ENCODE measurements at regions of chr1 and their contacts with region 1.

Region 1: GRCh38 chr1:78254517-78254916 is 208.8 kb downstream of the GIPC2 start:
- DNase-seq: peak; percentile 96
- ATAC-seq: peak; percentile 89
- H3K4me3 ChIP-seq: peak overlapping the region; percentile 14; the same call in 1 of the 2 replicates
- H3K27ac ChIP-seq: peak overlapping the region; percentile 98
- H3K4me1 ChIP-seq: peaks cover 33% of the 10 kb centered on the region
- H3K27me3 ChIP-seq: no peaks in the 10 kb centered on the region
- CTCF ChIP-seq: no peak

Region 2: GRCh38 chr1:78114034-78114956 is 140.2 kb before region 1 on chr1:
- CTCF ChIA-PET with region 1: no interaction called
- POLR2A ChIA-PET with region 1: no interaction called
- intact Hi-C with region 1: no loop called
- DNase-seq: peak; percentile 91
- ATAC-seq: peak; percentile 76
- H3K4me3 ChIP-seq: no peak overlapping the region
- H3K27ac ChIP-seq: no peak overlapping the region
- H3K4me1 ChIP-seq: peaks cover 4% of the 10 kb centered on the region; the same call in 1 of the 2 replicates
- H3K27me3 ChIP-seq: no peaks in the 10 kb centered on the region
- CTCF ChIP-seq: peak; percentile 99

Region 3: DNA sequence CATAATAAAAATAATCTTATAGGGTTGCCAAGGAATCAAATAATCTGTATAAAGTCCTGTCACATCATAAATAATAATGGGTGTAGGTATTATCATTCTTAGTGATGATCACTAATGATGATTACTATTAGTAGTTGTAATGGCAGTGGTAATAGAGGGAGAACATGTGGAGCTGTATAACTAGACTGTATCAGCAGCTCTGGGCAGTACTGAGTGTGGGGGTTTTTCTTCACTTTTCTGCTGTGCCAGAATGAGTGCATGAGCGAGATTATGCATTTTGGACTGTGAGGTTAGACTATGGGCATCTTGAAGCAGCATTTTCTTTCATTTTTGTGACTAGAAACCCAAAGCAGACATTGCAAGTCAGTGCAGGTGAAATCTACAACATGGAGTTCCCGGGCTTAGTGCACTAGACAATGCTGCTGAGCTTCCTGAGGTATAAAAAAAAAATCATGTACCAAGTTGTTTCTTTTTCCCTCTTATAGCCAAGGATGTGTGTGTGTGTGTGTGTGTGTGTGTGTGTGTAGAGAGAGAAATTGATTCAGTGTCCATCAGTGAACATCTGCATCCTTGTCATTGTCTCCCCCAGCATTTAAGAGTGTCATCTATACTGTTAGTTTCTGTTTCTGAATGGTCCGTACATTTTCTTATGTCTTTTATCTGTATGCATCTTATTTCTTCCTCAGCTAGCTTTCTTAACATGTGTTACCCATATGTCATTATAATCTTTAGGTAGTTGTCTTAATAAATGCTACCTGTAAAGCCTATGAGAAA is 122.2 kb before region 1 on chr1:
- CTCF ChIA-PET with region 1: interaction called, 3 read pairs
- POLR2A ChIA-PET with region 1: no interaction called
- intact Hi-C with region 1: loop called (anchors 5 kb)
- DNase-seq: no peak
- ATAC-seq: peak; percentile 20; the same call in 1 of the 2 replicates
- H3K4me3 ChIP-seq: no peak overlapping the region
- H3K27ac ChIP-seq: no peak overlapping the region
- H3K4me1 ChIP-seq: peaks cover 6% of the 10 kb centered on the region
- H3K27me3 ChIP-seq: no peaks in the 10 kb centered on the region
- CTCF ChIP-seq: no peak

Region 4: DNA sequence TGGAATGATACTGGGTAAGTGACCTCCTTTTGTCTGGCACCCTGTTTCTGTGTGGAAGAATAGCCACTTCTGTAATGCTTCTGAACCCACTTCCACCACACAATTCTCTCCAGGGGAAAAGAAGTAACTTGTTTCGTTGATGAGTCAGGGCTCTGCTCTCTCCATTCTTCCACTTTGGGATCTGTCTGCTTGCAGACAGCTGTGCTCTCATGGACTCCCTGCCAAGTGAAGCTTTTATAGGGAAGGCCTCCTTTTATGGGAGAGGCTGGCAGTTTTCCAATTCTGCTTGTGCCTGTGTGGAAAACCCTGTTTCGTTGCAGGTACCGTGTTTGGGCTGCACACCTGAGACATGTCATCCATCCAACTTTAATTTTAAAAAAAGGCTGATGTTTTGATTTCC is 78.1 kb before region 1 on chr1:
- CTCF ChIA-PET with region 1: interaction called, 5 read pairs
- POLR2A ChIA-PET with region 1: no interaction called
- intact Hi-C with region 1: loop called (anchors 1 kb)
- DNase-seq: peak; percentile 90
- ATAC-seq: peak; percentile 42
- H3K4me3 ChIP-seq: no peak overlapping the region
- H3K27ac ChIP-seq: peak overlapping the region; percentile 64
- H3K4me1 ChIP-seq: peaks cover 28% of the 10 kb centered on the region
- H3K27me3 ChIP-seq: no peaks in the 10 kb centered on the region
- CTCF ChIP-seq: no peak

Region 5: DNA sequence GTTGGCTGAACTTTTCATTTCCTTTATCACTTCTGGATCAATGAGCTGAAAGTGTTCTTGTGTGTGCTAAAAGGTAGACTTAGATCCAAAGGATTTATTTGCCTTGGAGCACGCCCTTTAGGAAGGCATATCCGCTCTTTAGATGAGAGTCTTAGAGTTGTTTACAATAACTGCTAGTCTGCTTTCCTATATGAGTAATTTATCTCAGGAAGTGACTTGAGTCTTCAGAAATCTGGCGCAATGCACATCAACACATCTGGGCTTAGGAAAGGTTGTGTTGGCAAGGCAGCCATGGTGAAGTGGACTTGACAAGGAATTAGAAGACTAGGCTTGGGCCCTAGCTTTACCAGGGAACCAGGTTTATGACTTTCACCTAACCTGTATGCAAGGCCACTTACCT is 32.2 kb after region 1 on chr1:
- CTCF ChIA-PET with region 1: interaction called, 4 read pairs
- POLR2A ChIA-PET with region 1: no interaction called
- intact Hi-C with region 1: loop called (anchors 1 kb)
- DNase-seq: peak; percentile 84
- ATAC-seq: peak; percentile 94
- H3K4me3 ChIP-seq: no peak overlapping the region
- H3K27ac ChIP-seq: peak overlapping the region; percentile 84
- H3K4me1 ChIP-seq: peaks cover 11% of the 10 kb centered on the region
- H3K27me3 ChIP-seq: no peaks in the 10 kb centered on the region
- CTCF ChIP-seq: no peak

Region 6: GRCh38 chr1:78472851-78473496 is 218.5 kb after region 1 on chr1:
- CTCF ChIA-PET with region 1: no interaction called
- POLR2A ChIA-PET with region 1: no interaction called
- intact Hi-C with region 1: loop called (anchors 1 kb)
- DNase-seq: peak; percentile 98
- ATAC-seq: peak; percentile 77
- H3K4me3 ChIP-seq: 0 out of 2 replicates have a peak overlapping the region, but pooled peaks have one; percentile 26
- H3K27ac ChIP-seq: peak overlapping the region; percentile 97
- H3K4me1 ChIP-seq: peaks cover 58% of the 10 kb centered on the region
- H3K27me3 ChIP-seq: no peaks in the 10 kb centered on the region
- CTCF ChIP-seq: no peak

Region 7: GRCh38 chr1:78831731-78832360 is 577.3 kb after region 1 on chr1:
- CTCF ChIA-PET with region 1: no interaction called
- POLR2A ChIA-PET with region 1: interaction called, 12 read pairs
- intact Hi-C with region 1: no loop called
- DNase-seq: peak; percentile 95
- ATAC-seq: peak; percentile 84
- H3K4me3 ChIP-seq: no peak overlapping the region
- H3K27ac ChIP-seq: peak overlapping the region; percentile 87
- H3K4me1 ChIP-seq: peaks cover 40% of the 10 kb centered on the region
- H3K27me3 ChIP-seq: no peaks in the 10 kb centered on the region
- CTCF ChIP-seq: no peak

Measured in PC-3 (cell line).